ENCODE measurements at regions of chr6 and their contacts with region 1.

Region 1: DNA sequence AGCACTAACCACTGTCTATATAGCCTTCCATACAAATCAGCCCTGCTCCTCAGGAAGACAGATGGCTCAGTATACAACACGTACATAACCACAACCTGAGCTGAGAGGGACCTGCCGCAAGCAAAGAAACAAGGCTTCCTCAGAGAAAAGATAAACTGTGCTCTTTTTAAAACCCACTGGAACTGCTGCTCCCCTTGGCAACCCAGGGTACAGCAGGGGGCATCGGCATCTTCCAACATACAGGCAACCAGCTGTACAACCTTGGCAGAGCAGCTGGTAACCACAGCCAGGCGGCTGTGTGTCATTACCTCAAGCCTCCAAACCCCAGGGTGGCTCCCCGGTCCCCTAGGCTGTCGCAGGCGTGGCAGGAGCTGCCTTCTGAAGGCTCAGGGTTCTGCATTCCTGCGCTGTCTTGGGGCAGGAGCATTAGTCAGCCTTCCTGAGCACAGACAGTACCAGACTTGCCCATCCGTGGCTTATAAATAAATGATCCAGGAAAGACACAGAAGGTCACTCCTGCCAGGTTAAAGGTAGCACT is 249.5 kb downstream of the ADGRG6 start:
- DNase-seq: no peak
- H3K4me3 ChIP-seq: no peak overlapping the region
- H3K27ac ChIP-seq: no peak overlapping the region
- H3K27me3 ChIP-seq: peaks cover 5% of the 10 kb centered on the region
- CTCF ChIP-seq: no peak

Region 2: DNA sequence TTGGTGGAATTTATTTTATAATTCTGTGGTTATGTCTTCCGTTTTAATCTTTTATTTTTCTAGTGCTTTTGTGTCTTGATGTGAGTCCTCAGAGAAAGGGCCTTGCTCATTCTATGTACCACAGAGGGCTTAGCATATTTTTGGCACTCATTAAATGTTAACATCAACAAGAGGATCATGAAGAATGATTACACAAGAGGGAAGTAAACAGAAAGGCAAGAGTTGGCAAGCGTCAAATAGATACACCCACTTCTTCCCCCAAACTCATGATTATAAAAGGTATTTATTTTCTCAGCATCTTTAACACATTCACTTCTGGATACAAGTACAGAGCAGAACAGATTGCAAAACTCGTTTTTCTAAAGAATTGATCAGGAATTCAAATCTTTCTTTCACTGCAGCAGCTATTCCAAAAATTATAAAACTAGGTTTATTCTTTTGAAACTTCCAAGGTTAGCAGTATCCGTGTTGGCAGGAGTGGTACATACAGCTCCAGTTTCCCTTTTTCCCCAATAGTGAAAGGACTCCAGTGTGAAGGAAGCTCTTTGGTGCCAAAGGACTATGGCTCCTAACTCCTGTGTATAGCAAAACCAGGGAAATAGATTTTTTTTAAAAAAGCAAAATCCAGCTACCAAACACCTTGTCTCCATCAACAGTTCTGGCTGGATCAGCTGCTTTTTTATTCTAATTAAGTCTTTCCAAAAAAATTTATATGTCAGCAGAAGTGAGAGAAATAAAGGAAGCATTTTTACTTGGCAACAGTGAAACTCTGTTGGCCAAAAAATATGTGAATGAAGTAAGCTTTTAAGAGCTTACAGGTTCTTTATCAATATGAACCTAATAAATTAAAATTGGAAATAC is 27.6 kb before region 1 on chr6:
- CTCF ChIA-PET with region 1: no interaction called
- POLR2A ChIA-PET with region 1: no interaction called
- DNase-seq: peak; percentile 24
- H3K4me3 ChIP-seq: no peak overlapping the region
- H3K27ac ChIP-seq: no peak overlapping the region
- H3K27me3 ChIP-seq: no peaks in the 10 kb centered on the region
- CTCF ChIP-seq: no peak

Region 3: DNA sequence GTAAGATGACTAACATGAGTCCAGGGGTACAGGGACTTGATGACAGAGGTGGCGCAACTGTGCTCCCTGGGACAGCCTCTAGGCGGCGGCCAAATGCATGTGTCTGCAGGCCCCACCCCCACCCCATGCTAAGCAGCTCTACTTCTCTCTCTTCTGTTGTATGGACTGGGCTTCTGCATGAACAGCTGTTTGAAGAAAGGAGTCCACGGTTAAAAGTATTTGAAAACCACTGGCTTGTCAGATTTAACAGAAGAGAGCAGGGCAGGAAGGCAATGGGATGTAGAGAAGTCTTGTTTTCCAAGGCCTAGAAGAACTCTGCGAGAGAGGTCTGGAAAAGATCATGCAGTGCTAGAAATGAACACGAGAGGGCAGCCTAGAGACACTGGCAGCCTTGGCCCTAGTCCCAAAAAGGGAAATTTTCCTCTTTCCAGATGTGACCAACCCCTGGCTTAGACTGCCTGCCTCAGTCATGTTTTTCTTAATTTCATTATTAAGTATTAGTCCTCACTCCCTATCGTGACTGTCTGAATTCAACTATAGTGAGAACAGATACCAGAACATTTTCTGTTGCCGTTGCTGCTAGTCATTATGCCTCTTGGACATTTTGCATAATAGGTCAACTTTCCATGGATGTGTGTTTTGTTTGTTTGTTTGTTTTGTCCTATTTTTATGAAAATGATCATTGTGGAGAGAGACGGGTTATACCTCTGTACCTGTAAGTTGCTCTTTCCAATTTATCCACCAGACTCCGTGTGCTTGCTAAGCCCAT is 15.5 kb after region 1 on chr6:
- CTCF ChIA-PET with region 1: interaction called, 16 read pairs
- POLR2A ChIA-PET with region 1: no interaction called
- DNase-seq: peak; percentile 7
- H3K4me3 ChIP-seq: no peak overlapping the region
- H3K27ac ChIP-seq: no peak overlapping the region
- H3K27me3 ChIP-seq: no peaks in the 10 kb centered on the region
- CTCF ChIP-seq: peak; percentile 96

Region 4: DNA sequence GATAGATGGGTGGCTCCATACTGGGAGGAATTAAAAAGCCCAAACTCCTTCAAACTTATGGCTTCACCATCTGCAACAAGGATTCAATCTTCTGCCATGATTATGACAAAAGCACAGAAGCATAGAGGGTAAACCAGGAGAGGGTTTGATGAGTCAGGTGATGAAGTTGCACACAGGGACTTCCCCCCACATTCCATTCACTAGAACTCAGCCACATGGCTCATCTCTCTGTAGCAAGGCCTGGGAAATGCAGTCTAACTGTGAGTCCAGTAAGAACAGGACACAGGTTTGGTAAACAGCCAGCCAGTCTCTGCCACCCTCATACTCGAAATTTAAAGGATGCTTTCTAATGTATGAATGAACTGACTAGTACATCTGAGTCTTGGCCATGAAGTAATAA is 250.8 kb after region 1 on chr6:
- CTCF ChIA-PET with region 1: no interaction called
- POLR2A ChIA-PET with region 1: no interaction called
- DNase-seq: peak; percentile 94
- H3K4me3 ChIP-seq: no peak overlapping the region
- H3K27ac ChIP-seq: peak overlapping the region; percentile 62
- H3K27me3 ChIP-seq: no peaks in the 10 kb centered on the region
- CTCF ChIP-seq: no peak

Measured in AG04450 (cell line).